ENCODE measurements at regions of chr22 and their contacts with region 1.

Region 1: GRCh38 chr22:50341977-50342650 is 1.0 kb upstream of the PPP6R2 start:
- DNase-seq: no peak
- H3K4me3 ChIP-seq: peak overlapping the region; percentile 72 to 98 (median 96)
- H3K27ac ChIP-seq: peak overlapping the region; percentile 85 to 96 (median 92)
- H3K4me1 ChIP-seq: peaks cover 11 to 27% (median 13%) of the 10 kb centered on the region in 3 donors
- H3K27me3 ChIP-seq: no peaks in the 10 kb centered on the region
- CTCF ChIP-seq: peak; percentile 95 to 99 (median 98)
- POLR2A ChIP-seq: no peak

Region 2: GRCh38 chr22:50044485-50045118 is 297.5 kb before region 1 on chr22:
- intact Hi-C with region 1: no loop called
- DNase-seq: no peak
- H3K4me3 ChIP-seq: no peak overlapping the region
- H3K27ac ChIP-seq: no peak overlapping the region
- H3K4me1 ChIP-seq: no peaks in the 10 kb centered on the region
- H3K27me3 ChIP-seq: peaks cover 0 to 80% (median 2%) of the 10 kb centered on the region in 4 donors
- CTCF ChIP-seq: no peak
- POLR2A ChIP-seq: no peak

Region 3: GRCh38 chr22:50244420-50245213 is 97.5 kb before region 1 on chr22 and contains the start of gene TUBGCP6:
- intact Hi-C with region 1: loop called (anchors 5 kb)
- DNase-seq: peak; percentile 69
- H3K4me3 ChIP-seq: peak within 1 kb of the TSS; percentile 69 to 97 (median 86)
- H3K27ac ChIP-seq: peak within 1 kb of the TSS; percentile 90 to 98 (median 96)
- H3K4me1 ChIP-seq: peaks cover 30 to 85% (median 52%) of the 10 kb centered on the region in 3 donors
- H3K27me3 ChIP-seq: no peaks in the 10 kb centered on the region
- CTCF ChIP-seq: peak in 4 of 6 experiments; percentile 9 to 66 (median 52)
- POLR2A ChIP-seq: peak in 3 of 4 donors; percentile 82
- total RNA-seq, gene TUBGCP6: 20.3 to 44.3 (median 32.2) TPM

Region 4: DNA sequence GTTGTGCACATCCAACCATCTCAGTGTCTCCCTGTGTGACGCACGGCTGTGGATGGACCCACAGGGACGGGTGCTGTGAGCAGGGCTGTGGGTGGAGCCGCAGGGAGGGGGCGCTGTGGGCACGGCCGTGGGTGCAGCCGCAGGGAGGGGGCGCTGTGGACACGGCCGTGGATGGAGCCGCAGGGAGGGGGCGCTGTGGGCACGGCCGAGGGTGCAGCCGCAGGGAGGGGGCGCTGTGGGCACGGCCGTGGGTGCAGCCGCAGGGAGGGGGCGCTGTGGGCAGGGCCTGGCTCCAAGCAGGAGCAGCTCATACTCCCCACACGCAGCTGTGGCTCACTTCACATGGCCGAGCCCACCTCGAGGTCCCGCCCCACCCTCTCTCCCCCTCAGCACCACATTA is 66.0 kb before region 1 on chr22:
- intact Hi-C with region 1: loop called (anchors 2 kb)
- DNase-seq: peak; percentile 52
- H3K4me3 ChIP-seq: no peak overlapping the region
- H3K27ac ChIP-seq: peak overlapping the region; percentile 41 to 67 (median 63)
- H3K4me1 ChIP-seq: peaks cover 12 to 88% (median 18%) of the 10 kb centered on the region in 3 donors
- H3K27me3 ChIP-seq: peaks cover 0 to 11% (median 0%) of the 10 kb centered on the region in 4 donors
- CTCF ChIP-seq: peak in 5 of 6 experiments; percentile 24 to 78 (median 45)
- POLR2A ChIP-seq: no peak

Measured in esophagus squamous epithelium (tissue), 5 donors.